ENCODE measurements at regions of chr13 and their contacts with region 1.

Region 1: GRCh38 chr13:20475927-20476691 is 49.5 kb downstream of the CRYL1 start:
- DNase-seq: peak; percentile 48 to 93 (median 68)
- ATAC-seq: peak; percentile 86
- H3K4me3 ChIP-seq: peak overlapping the region; percentile 42
- H3K4me3 Mint-ChIP-seq: peak overlapping the region; percentile 86
- H3K27ac ChIP-seq: peak overlapping the region; percentile 63 to 64
- H3K27ac Mint-ChIP-seq: peak overlapping the region; percentile 99
- H3K4me1 ChIP-seq: peaks cover 33% of the 10 kb centered on the region
- H3K4me1 Mint-ChIP-seq: peaks cover 65% of the 10 kb centered on the region
- H3K27me3 ChIP-seq: no peaks in the 10 kb centered on the region
- H3K27me3 Mint-ChIP-seq: no peaks in the 10 kb centered on the region
- CTCF ChIP-seq: no peak

Region 2: DNA sequence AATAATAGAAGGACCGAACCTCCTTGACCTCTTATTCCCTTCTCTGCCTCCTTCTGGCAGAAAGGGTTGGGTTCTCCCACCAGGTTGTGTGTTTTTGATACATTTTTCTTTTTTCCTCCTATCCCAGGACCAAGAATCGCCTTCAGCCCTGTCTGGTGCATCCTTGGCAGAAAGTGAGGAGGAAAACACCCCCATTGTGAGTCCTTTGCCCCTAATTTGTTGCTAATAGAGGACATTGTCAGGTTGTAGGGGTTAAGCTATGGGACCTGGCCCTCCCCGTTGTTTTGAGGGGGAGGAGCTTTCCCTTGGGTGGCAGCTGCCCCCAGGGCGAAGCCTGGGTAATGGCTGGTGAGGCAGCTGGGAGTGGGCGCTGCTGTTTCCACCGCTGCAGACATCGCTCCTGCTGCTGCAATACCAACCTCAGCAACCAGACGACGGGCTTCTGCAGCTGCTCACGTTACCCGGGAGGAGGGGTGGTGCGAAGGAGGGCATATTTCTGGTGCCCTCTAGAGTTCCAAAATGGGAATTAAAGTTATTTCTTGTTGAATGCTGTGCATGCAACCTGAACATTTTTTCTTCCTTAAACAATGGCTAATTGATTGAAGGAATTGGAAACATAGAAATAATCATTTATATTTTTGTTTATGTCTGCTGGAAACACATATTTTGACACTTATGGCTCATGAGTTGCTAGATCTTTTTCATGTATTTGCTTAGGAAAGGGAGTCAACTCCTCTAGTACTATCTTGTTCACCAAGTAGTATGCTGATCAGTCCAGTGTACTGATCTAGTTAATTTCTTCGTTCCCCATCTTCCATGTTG is 516.1 kb before region 1 on chr13:
- CTCF ChIA-PET with region 1: no interaction called
- POLR2A ChIA-PET with region 1: interaction called, 3 read pairs
- intact Hi-C with region 1: loop called in 1 of 2 experiments (anchors 5 kb)
- DNase-seq: peak; percentile 75 to 96 (median 81)
- ATAC-seq: peak; percentile 55
- H3K4me3 ChIP-seq: peak overlapping the region; percentile 81
- H3K4me3 Mint-ChIP-seq: peak overlapping the region; percentile 98
- H3K27ac ChIP-seq: peak overlapping the region; percentile 81 to 93
- H3K27ac Mint-ChIP-seq: peak overlapping the region; percentile 99
- H3K4me1 ChIP-seq: peaks cover 30% of the 10 kb centered on the region
- H3K4me1 Mint-ChIP-seq: peaks cover 28% of the 10 kb centered on the region
- H3K27me3 ChIP-seq: no peaks in the 10 kb centered on the region
- H3K27me3 Mint-ChIP-seq: no peaks in the 10 kb centered on the region
- CTCF ChIP-seq: peak; percentile 87

Region 3: GRCh38 chr13:20090349-20090748 is 385.8 kb before region 1 on chr13:
- CTCF ChIA-PET with region 1: no interaction called
- POLR2A ChIA-PET with region 1: no interaction called
- intact Hi-C with region 1: no loop called
- DNase-seq: peak in 3 of 14 experiments; percentile 16 to 20 (median 19)
- ATAC-seq: peak; percentile 57
- H3K4me3 ChIP-seq: no peak overlapping the region
- H3K4me3 Mint-ChIP-seq: no peak overlapping the region
- H3K27ac ChIP-seq: no peak overlapping the region
- H3K27ac Mint-ChIP-seq: no peak overlapping the region
- H3K4me1 ChIP-seq: no peaks in the 10 kb centered on the region
- H3K4me1 Mint-ChIP-seq: no peaks in the 10 kb centered on the region
- H3K27me3 ChIP-seq: no peaks in the 10 kb centered on the region
- H3K27me3 Mint-ChIP-seq: no peaks in the 10 kb centered on the region
- CTCF ChIP-seq: peak; percentile 28

Region 4: DNA sequence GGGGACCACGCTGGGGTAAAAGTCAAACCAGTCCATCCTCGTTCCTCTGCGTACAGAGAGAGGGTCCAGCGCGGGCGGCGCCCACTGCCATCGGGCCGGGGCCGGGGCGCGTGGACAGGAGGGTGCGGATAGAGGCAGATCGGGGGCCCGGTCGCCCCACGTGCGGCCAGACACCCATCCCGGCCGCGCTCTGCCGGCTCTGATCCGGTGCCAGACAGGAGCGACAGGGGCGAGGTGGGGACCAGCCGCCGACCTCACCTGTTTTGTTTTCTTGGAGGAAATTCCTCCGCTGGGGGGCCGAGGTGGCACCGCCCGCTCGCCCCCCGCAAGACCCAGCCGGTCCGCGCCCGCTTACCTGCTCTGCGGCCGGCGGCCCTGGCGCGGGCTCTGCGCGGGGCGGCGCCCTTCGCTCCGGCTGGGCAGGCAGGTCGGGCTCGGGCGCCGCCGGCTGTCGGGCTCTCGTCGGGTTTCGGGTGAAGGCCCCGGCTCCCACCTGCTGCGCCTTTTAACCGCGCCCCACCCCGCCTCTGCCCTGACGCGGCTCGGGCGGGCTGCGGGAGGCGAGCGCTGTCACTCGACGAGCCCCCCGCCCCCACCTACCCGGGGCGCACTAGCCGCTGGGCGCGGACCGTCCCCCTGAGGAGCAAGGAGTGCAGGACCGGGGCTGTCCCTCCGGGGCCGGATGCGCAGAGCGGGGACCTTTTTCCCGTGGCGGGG is 244.1 kb before region 1 on chr13 and contains the start of gene GJB6:
- CTCF ChIA-PET with region 1: no interaction called
- POLR2A ChIA-PET with region 1: interaction called, 21 read pairs
- intact Hi-C with region 1: no loop called
- DNase-seq: peak in 11 of 14 experiments; percentile 7 to 47 (median 28)
- ATAC-seq: peak; percentile 70
- H3K4me3 ChIP-seq: peak within 1 kb of the TSS; percentile 55
- H3K4me3 Mint-ChIP-seq: peak within 1 kb of the TSS; percentile 95
- H3K27ac ChIP-seq: no peak within 1 kb of the TSS
- H3K27ac Mint-ChIP-seq: peak within 1 kb of the TSS; percentile 88
- H3K4me1 ChIP-seq: peaks cover 21% of the 10 kb centered on the region
- H3K4me1 Mint-ChIP-seq: peaks cover 10% of the 10 kb centered on the region
- H3K27me3 ChIP-seq: peaks cover 11 to 13% of the 10 kb centered on the region in 2 experiments
- H3K27me3 Mint-ChIP-seq: peaks cover 5% of the 10 kb centered on the region
- CTCF ChIP-seq: no peak
- total RNA-seq, gene GJB6: 19.8 to 26.0 TPM

Region 5: DNA sequence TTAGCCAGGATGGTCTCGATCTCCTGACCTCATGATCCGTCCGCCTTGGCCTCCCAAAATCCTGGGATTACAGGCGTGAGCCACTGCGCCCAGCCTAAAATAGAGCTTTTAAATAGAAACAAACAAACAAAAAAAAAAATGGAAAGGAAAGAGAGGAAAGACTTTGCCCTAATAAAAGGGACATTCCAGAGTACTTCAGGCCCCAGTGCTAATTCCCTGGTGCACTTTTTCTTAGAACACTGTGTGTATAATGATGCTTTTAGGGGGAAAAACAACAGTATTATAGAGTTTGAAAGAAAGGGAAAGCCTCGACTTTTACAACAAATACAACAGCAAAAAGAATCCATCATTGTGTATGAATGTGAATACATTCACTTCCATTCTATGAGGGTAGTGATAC is 55.2 kb before region 1 on chr13:
- CTCF ChIA-PET with region 1: no interaction called
- POLR2A ChIA-PET with region 1: interaction called, 11 read pairs
- intact Hi-C with region 1: no loop called
- DNase-seq: no peak
- ATAC-seq: no peak
- H3K4me3 ChIP-seq: no peak overlapping the region
- H3K4me3 Mint-ChIP-seq: no peak overlapping the region
- H3K27ac ChIP-seq: no peak overlapping the region
- H3K27ac Mint-ChIP-seq: peak overlapping the region; percentile 28
- H3K4me1 ChIP-seq: peaks cover 22% of the 10 kb centered on the region
- H3K4me1 Mint-ChIP-seq: peaks cover 30% of the 10 kb centered on the region
- H3K27me3 ChIP-seq: no peaks in the 10 kb centered on the region
- H3K27me3 Mint-ChIP-seq: no peaks in the 10 kb centered on the region
- CTCF ChIP-seq: no peak

Region 6: DNA sequence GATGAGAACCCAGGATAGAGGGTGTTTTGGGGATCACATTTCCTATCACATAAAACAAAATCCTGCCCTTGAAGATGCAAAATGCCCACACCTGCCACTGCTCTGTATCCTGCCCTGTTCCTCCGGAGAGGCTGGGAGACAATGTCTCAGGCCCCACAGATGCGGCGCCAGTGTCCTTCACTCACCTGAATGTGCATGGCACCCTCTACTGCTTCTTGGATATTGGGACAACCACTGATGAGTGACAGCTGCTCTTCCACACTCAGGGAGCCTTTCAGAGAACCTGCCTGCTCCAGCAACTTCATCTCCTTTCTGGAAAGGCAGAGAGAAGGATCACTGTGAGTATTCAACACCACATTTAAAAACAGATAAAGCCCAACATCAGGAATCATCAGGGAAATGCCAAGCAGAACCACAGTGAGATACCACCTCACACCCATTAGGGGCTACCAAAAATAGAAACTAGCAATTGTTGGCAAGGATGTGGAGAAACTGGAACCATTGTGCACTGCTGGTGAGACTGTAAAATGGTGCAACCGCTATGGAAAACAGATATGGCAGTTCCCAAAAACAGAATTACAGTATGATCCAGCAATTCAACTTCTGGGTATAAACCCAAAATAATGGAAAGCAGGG is 13.2 kb after region 1 on chr13:
- CTCF ChIA-PET with region 1: interaction called, 4 read pairs
- POLR2A ChIA-PET with region 1: interaction called, 19 read pairs
- intact Hi-C with region 1: no loop called
- DNase-seq: peak in 6 of 14 experiments; percentile 41 to 75 (median 60)
- ATAC-seq: peak; percentile 96
- H3K4me3 ChIP-seq: no peak overlapping the region
- H3K4me3 Mint-ChIP-seq: no peak overlapping the region
- H3K27ac ChIP-seq: no peak overlapping the region
- H3K27ac Mint-ChIP-seq: no peak overlapping the region
- H3K4me1 ChIP-seq: no peaks in the 10 kb centered on the region
- H3K4me1 Mint-ChIP-seq: peaks cover 10% of the 10 kb centered on the region
- H3K27me3 ChIP-seq: no peaks in the 10 kb centered on the region
- H3K27me3 Mint-ChIP-seq: no peaks in the 10 kb centered on the region
- CTCF ChIP-seq: peak; percentile 86

Region 7: DNA sequence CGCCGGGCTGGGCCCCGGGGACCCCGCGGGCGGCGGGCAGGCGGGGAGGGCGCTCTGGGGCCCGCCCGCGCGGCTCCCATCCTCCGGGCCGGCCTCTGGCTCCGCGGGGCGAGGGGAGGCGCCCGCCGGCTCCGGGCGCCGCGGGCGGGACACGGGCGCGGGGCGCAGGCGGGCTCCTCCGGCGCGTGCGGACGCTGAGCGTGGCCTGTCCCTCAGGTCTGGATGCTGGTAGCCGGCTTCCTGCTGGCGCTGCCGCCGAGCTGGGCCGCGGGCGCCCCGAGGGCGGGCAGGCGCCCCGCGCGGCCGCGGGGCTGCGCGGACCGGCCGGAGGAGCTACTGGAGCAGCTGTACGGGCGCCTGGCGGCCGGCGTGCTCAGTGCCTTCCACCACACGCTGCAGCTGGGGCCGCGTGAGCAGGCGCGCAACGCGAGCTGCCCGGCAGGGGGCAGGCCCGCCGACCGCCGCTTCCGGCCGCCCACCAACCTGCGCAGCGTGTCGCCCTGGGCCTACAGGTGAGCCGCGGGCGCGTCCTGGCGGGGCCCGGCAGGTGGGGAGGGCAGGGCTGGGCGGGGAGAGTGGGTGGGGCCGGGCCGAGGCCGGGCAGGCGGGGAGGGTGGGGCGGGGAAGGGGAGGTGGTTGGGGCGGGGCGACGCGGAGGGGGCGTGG is 227.8 kb after region 1 on chr13:
- CTCF ChIA-PET with region 1: no interaction called
- POLR2A ChIA-PET with region 1: interaction called, 6 read pairs
- intact Hi-C with region 1: loop called in 1 of 2 experiments (anchors 5 kb)
- DNase-seq: peak; percentile 50 to 91 (median 70)
- ATAC-seq: peak; percentile 91
- H3K4me3 ChIP-seq: no peak overlapping the region
- H3K4me3 Mint-ChIP-seq: no peak overlapping the region
- H3K27ac ChIP-seq: no peak overlapping the region
- H3K27ac Mint-ChIP-seq: no peak overlapping the region
- H3K4me1 ChIP-seq: peaks cover 14% of the 10 kb centered on the region
- H3K4me1 Mint-ChIP-seq: peaks cover 7% of the 10 kb centered on the region
- H3K27me3 ChIP-seq: peaks cover 18 to 33% of the 10 kb centered on the region in 2 experiments
- H3K27me3 Mint-ChIP-seq: peaks cover 35% of the 10 kb centered on the region
- CTCF ChIP-seq: peak; percentile 21

Region 8: GRCh38 chr13:20828539-20829364 is 352.6 kb after region 1 on chr13:
- CTCF ChIA-PET with region 1: no interaction called
- POLR2A ChIA-PET with region 1: no interaction called
- intact Hi-C with region 1: no loop called
- DNase-seq: peak in 9 of 14 experiments; percentile 4 to 79 (median 25)
- ATAC-seq: peak; percentile 95
- H3K4me3 ChIP-seq: peak overlapping the region; percentile 13
- H3K4me3 Mint-ChIP-seq: peak overlapping the region; percentile 12
- H3K27ac ChIP-seq: no peak overlapping the region
- H3K27ac Mint-ChIP-seq: peak overlapping the region; percentile 48
- H3K4me1 ChIP-seq: no peaks in the 10 kb centered on the region
- H3K4me1 Mint-ChIP-seq: peaks cover 12% of the 10 kb centered on the region
- H3K27me3 ChIP-seq: no peaks in the 10 kb centered on the region
- H3K27me3 Mint-ChIP-seq: no peaks in the 10 kb centered on the region
- CTCF ChIP-seq: peak; percentile 79

Region 9: GRCh38 chr13:20902438-20903163 is 426.5 kb after region 1 on chr13 and contains the start of gene XPO4:
- CTCF ChIA-PET with region 1: no interaction called
- POLR2A ChIA-PET with region 1: interaction called, 13 read pairs
- intact Hi-C with region 1: no loop called
- DNase-seq: peak; percentile 52 to 89 (median 70)
- ATAC-seq: peak; percentile 96
- H3K4me3 ChIP-seq: peak within 1 kb of the TSS; percentile 99
- H3K4me3 Mint-ChIP-seq: peak within 1 kb of the TSS; percentile 97
- H3K27ac ChIP-seq: peak within 1 kb of the TSS; percentile 79 to 88
- H3K27ac Mint-ChIP-seq: peak within 1 kb of the TSS; percentile 90
- H3K4me1 ChIP-seq: peaks cover 22% of the 10 kb centered on the region
- H3K4me1 Mint-ChIP-seq: peaks cover 32% of the 10 kb centered on the region
- H3K27me3 ChIP-seq: no peaks in the 10 kb centered on the region
- H3K27me3 Mint-ChIP-seq: no peaks in the 10 kb centered on the region
- CTCF ChIP-seq: no peak
- total RNA-seq, gene XPO4: 22.5 to 22.7 TPM